ENCODE measurements at regions of chr9 and their contacts with region 1.

Region 1: DNA sequence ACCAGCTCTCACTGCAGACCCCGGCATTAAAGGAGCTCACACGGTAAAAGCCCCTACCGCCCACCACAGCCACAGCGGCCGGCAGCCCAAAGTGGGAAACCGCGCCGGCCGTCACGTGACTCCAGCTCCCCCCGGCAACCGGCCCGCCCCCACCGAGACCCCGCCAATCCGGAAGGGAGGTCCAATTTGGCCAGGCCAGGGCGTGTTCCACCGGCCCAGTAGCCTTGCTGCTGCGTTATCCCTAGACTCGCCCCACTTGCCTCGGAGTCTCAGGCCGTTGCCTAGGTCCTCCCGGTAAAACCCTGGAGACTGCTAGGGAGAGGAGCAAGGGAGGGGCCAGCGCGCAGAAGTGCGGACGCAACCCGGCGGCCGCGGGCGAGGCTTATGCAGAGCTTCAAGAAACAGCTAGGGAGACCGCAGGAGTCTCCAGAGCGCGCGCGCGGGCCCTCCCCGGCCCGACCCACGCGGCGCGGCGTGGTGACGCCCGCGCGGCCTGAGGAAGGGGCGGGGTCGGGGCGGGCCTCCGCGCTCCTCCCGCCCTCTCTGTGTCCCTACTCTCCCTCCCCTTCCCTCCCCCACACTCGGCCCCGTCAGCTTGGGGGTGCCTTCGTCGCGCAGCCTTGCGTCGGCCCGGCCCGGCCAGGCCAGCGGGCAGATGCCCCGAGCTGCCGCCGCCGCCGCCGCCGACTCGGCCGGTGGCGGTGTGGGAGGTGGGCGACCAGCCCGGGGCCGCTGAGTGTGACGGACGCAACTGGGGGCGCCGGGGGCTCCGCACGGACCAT is at the start of gene RIC1:
- DNase-seq: peak; percentile 90
- H3K4me3 Mint-ChIP-seq: peak within 1 kb of the TSS; percentile 99
- H3K27ac Mint-ChIP-seq: peak within 1 kb of the TSS; percentile 98
- H3K4me1 Mint-ChIP-seq: peaks cover 74% of the 10 kb centered on the region
- H3K27me3 Mint-ChIP-seq: no peaks in the 10 kb centered on the region
- total RNA-seq, gene RIC1: 20.9 and 22.3 TPM in 2 replicates

Region 2: GRCh38 chr9:4792572-4793458 is 835.9 kb before region 1 on chr9 and contains the start of gene RCL1:
- intact Hi-C with region 1: loop called (anchors 5 kb)
- DNase-seq: peak; percentile 99
- H3K4me3 Mint-ChIP-seq: peak within 1 kb of the TSS; percentile 96
- H3K27ac Mint-ChIP-seq: peak within 1 kb of the TSS; percentile 96
- H3K4me1 Mint-ChIP-seq: peaks cover 62% of the 10 kb centered on the region
- H3K27me3 Mint-ChIP-seq: no peaks in the 10 kb centered on the region
- total RNA-seq, gene RCL1: 53.3 and 53.4 TPM in 2 replicates

Region 3: DNA sequence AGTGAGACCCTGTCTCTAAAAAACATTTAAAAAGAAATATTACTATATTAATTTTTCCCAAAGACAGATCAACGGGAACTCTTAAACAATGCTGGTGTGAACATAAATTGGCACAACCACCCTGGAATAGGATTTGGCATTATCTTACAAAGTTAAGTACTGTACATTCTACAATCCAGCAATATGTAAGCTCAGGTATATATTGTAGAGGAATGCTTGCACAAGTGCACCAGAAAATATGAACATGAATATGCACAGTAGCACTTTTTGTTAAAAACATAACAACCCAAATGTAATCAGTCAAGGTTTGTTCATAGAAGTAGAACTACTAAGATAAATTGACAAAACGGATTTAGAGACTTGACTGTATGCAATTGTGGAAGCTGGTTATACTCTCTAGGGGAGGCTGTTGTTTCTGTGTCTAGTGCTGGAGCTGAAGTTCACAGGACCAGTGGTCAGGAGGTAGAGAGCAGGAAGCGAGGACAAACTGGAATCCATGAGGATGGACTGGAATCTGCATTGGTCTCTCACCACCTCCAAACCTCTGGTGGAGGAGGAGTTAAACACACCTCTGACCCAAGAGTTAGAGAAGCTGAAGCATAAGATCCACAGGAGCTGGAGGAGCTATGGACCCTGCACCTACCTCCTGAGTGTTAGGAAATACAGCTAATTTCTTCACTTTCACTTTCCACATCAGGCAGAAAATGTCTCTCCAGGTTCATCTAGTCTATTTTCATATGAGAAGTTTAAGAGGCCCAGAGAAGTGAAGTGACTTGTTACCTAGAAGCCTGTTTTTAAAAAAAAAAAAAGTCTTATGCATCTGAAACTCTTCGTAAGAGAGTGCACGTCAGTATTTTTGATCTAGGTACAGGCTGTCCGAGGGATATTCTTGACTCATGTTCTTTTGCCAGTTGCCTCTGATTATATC is 20.2 kb before region 1 on chr9:
- intact Hi-C with region 1: loop called (anchors 2 kb)
- DNase-seq: no peak
- H3K4me3 Mint-ChIP-seq: peak overlapping the region; percentile 54
- H3K27ac Mint-ChIP-seq: peak overlapping the region; percentile 9
- H3K4me1 Mint-ChIP-seq: peaks cover 18% of the 10 kb centered on the region
- H3K27me3 Mint-ChIP-seq: no peaks in the 10 kb centered on the region

Region 4: GRCh38 chr9:5644501-5644900 is 15.8 kb after region 1 on chr9:
- intact Hi-C with region 1: no loop called
- DNase-seq: no peak
- H3K4me3 Mint-ChIP-seq: no peak overlapping the region
- H3K27ac Mint-ChIP-seq: peak overlapping the region; percentile 47
- H3K4me1 Mint-ChIP-seq: peaks cover 22% of the 10 kb centered on the region
- H3K27me3 Mint-ChIP-seq: no peaks in the 10 kb centered on the region

Region 5: GRCh38 chr9:5721279-5722087 is 92.8 kb after region 1 on chr9:
- intact Hi-C with region 1: no loop called
- DNase-seq: no peak
- H3K4me3 Mint-ChIP-seq: no peak overlapping the region
- H3K27ac Mint-ChIP-seq: no peak overlapping the region
- H3K4me1 Mint-ChIP-seq: peaks cover 4% of the 10 kb centered on the region
- H3K27me3 Mint-ChIP-seq: no peaks in the 10 kb centered on the region

Region 6: DNA sequence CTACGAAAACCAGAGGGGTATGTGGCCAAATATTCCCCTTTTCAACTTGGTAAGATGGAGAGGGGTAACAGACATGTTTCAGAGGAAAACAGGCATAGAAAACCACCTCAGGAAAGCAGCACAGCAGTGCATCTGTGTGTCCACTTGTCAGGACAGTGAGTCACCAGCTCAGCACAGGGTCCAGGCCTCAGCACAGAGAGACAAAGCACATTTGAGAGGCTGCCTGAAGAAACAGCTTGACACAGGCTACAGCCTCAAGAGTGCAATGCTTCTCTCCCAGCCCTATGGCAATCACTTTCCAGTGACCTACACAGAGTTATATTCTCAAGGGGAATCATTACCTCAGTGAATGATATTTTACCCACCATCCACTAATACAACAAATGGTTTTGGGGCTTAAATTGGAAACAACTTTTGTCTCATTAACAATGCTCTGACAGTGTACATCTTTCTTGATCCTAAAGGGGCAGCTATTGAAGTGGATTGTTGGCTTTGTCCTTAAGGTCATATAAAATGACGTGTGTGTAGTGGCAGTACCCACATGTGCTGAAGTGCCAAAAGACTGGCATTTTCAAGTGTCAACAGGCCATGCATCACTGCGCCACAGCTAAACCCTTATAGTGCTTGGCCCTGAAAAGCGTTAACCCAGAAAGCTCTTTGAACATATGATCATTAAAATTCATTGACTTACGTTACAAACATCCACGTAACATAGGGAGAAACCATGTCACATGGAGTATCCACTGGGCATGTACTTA is 157.8 kb after region 1 on chr9:
- intact Hi-C with region 1: loop called (anchors 5 kb)
- DNase-seq: no peak
- H3K4me3 Mint-ChIP-seq: no peak overlapping the region
- H3K27ac Mint-ChIP-seq: no peak overlapping the region
- H3K4me1 Mint-ChIP-seq: peaks cover 60% of the 10 kb centered on the region
- H3K27me3 Mint-ChIP-seq: no peaks in the 10 kb centered on the region

Region 7: DNA sequence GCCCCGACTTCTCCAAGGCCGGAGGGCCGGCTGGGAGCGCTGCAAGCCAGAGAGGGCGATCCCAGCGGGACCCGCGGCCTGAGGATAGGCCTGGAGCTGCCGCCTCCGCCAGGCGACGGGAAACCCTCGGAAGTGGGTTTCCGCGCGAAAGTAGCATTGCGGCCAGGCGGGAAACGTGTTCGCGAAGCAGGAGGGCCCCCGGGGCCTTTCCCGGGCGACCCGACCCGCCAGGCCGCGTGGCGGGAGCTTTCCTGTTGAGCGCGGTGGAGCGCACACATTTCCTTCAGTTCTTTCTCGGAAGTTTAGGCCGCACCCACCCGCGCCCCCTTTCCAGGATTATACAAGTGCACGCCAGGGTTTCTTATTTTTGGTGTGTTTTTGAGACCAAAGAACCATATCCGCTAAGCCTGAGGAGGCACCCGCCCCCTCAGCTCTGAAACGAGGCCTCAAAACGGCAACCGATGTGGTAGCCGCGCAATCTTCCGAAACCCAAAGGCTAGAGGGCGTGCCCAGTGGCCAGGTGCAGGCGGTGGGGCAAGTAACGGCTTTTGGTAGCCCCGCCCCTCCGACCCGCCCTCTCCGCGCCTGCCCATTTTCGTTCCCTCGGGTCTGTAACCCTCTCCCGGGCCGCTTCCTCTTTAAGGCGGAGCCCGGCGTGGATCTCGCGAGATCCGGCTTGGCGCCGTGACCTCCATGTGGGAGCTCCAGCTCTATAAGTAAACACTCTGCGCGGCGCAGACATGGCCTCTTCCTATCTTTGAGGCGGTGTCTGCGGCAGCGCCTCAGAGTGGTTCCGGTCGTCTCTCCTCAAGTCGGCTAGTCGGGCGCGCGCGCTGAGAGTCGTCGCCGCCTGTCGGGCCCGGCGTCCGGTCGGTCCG is 784.0 kb after region 1 on chr9 and contains the start of gene UHRF2:
- intact Hi-C with region 1: loop called (anchors 2 kb)
- DNase-seq: peak; percentile 97
- H3K4me3 Mint-ChIP-seq: peak within 1 kb of the TSS; percentile 89
- H3K27ac Mint-ChIP-seq: peak within 1 kb of the TSS; percentile 92
- H3K4me1 Mint-ChIP-seq: peaks cover 27% of the 10 kb centered on the region
- H3K27me3 Mint-ChIP-seq: no peaks in the 10 kb centered on the region
- total RNA-seq, gene UHRF2: 73.0 and 77.3 TPM in 2 replicates